PC-9 (cell line): ENCODE measurements at regions of chr14 and their contacts with region 1.

Region 1: GRCh38 chr14:61750708-61751474 is 11.3 kb upstream of the SNAPC1 start:
- DNase-seq: peak; percentile 93 to 95
- H3K4me3 ChIP-seq: peak overlapping the region; percentile 67
- H3K27ac ChIP-seq: peak overlapping the region; percentile 89
- H3K4me1 ChIP-seq: peaks cover 88% of the 10 kb centered on the region
- H3K27me3 ChIP-seq: no peaks in the 10 kb centered on the region
- CTCF ChIP-seq: no peak

Region 2: GRCh38 chr14:61296719-61297502 is 454.0 kb before region 1 on chr14:
- CTCF ChIA-PET with region 1: no interaction called
- POLR2A ChIA-PET with region 1: interaction called, 35 read pairs
- intact Hi-C with region 1: no loop called
- DNase-seq: peak; percentile 12 to 70
- H3K4me3 ChIP-seq: no peak overlapping the region
- H3K27ac ChIP-seq: no peak overlapping the region
- H3K4me1 ChIP-seq: 0 out of 2 replicates have a peak, but pooled peaks cover 4% of the 10 kb centered on the region
- H3K27me3 ChIP-seq: no peaks in the 10 kb centered on the region
- CTCF ChIP-seq: peak; percentile 84

Region 3: DNA sequence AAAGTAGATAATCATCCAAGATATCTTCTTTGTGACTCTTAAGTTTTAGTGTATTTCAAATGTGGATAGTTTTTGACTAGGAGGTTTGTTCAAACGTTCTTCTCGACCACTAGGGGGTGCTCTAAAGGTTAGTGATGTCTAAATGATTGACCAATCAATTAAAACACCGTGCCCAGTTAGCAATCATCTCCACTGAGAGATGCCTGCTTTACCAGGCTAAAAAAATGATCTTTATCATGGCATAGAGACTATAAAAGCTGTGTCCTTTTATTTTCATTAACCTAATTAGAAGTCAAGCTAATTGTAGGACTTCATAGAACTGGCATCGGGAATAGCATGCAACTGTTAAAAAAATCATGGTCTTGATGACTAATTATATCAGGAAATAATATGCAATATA is 275.6 kb before region 1 on chr14:
- CTCF ChIA-PET with region 1: no interaction called
- POLR2A ChIA-PET with region 1: interaction called, 4 read pairs
- intact Hi-C with region 1: loop called (anchors 2 kb)
- DNase-seq: peak in 1 of 2 experiments; percentile 74
- H3K4me3 ChIP-seq: no peak overlapping the region
- H3K27ac ChIP-seq: peak overlapping the region; percentile 94
- H3K4me1 ChIP-seq: peaks cover 92% of the 10 kb centered on the region
- H3K27me3 ChIP-seq: no peaks in the 10 kb centered on the region
- CTCF ChIP-seq: peak; percentile 90

Region 4: GRCh38 chr14:61568572-61569131 is 182.2 kb before region 1 on chr14:
- CTCF ChIA-PET with region 1: no interaction called
- POLR2A ChIA-PET with region 1: interaction called, 10 read pairs
- intact Hi-C with region 1: loop called (anchors 1 kb)
- DNase-seq: peak; percentile 73 to 75
- H3K4me3 ChIP-seq: peak overlapping the region; percentile 48
- H3K27ac ChIP-seq: peak overlapping the region; percentile 98
- H3K4me1 ChIP-seq: peaks cover 97% of the 10 kb centered on the region
- H3K27me3 ChIP-seq: no peaks in the 10 kb centered on the region
- CTCF ChIP-seq: no peak; the same call in 1 of the 2 replicates

Region 5: DNA sequence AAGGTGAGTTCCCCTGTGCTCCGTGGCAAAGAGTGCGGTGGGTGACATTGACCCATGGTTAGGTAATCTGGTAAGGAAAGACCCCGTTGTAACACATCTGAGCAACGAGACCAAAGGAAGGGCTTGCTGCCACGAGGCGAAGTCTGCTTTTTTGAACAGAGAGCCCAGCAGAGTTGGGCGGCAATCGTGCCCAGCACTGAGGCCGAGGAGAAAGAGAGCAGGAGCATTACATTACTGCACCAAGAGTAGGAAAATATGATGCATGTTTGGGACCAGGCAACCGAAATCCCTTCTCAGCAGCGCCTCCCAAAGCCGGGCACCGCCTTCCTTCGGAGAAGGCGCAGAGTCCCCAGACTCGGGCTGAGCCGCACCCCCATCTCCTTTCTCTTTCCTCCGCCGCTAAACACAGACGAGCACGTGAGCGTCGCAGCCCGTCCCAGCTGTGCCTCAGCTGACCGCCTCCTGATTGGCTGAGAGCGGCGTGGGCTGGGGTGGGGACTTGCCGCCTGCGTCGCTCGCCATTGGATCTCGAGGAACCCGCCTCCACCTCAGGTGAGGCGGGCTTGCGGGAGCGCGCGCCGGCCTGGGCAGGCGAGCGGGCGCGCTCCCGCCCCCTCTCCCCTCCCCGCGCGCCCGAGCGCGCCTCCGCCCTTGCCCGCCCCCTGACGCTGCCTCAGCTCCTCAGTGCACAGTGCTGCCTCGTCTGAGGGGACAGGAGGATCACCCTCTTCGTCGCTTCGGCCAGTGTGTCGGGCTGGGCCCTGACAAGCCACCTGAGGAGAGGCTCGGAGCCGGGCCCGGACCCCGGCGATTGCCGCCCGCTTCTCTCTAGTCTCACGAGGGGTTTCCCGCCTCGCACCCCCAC is 55.8 kb before region 1 on chr14 and contains the start of gene HIF1A:
- CTCF ChIA-PET with region 1: no interaction called
- POLR2A ChIA-PET with region 1: interaction called, 6 read pairs
- intact Hi-C with region 1: loop called (anchors 5 kb)
- DNase-seq: peak; percentile 98
- H3K4me3 ChIP-seq: peak within 1 kb of the TSS; percentile 85
- H3K27ac ChIP-seq: peak within 1 kb of the TSS; percentile 93
- H3K4me1 ChIP-seq: peaks cover 28% of the 10 kb centered on the region
- H3K27me3 ChIP-seq: no peaks in the 10 kb centered on the region
- CTCF ChIP-seq: no peak
- total RNA-seq, gene HIF1A: 146 and 154 TPM in 2 replicates

Region 6: GRCh38 chr14:61837336-61838229 is 86.7 kb after region 1 on chr14:
- CTCF ChIA-PET with region 1: no interaction called
- POLR2A ChIA-PET with region 1: no interaction called
- intact Hi-C with region 1: loop called (anchors 5 kb)
- DNase-seq: peak; percentile 69 to 81
- H3K4me3 ChIP-seq: no peak overlapping the region
- H3K27ac ChIP-seq: peak overlapping the region; percentile 60
- H3K4me1 ChIP-seq: peaks cover 21% of the 10 kb centered on the region
- H3K27me3 ChIP-seq: no peaks in the 10 kb centered on the region
- CTCF ChIP-seq: peak; percentile 97

Region 7: DNA sequence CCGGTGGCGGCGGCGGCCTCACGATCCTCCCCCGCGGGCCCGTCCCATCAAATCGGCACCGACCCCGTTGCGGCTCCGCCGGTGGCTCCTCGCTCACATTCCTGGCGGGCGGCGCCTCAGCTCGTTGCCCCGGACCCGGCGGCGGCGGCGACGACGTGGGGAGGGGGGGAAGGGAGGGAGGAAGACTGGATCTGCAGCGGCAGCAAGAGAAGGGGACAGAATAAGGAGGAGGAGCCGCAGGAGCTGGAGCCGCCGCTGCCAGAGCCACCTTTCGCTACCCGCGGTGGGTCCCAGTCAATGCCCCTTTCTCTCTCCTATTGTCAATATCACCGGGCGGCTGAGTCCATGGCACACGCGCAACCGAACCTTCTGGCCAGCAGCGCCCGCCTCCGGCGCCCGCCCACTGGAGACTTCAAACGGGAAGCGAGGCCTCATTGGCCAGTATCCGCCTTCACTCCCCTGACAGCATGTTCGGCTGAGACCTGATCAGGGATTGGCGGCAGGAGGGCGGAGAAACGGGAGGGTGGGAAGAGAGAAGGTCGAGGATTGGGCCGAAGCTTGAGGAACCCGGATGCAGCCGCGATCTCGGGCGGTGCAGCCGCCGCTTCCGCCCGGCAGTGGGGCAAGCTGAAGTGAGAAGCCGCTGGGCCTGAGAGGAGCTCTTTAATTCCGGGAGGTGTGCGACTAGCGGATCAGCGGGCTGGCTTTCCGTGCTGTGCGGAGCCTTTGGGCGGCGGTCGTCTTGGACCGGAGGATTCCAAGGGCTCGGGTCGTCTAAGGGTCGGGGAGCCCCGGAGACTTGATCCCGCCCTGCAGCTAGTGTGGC is 1792.3 kb after region 1 on chr14 and contains the start of gene PPP2R5E:
- CTCF ChIA-PET with region 1: no interaction called
- POLR2A ChIA-PET with region 1: interaction called, 12 read pairs
- intact Hi-C with region 1: no loop called
- DNase-seq: peak; percentile 97 to 99
- H3K4me3 ChIP-seq: peak within 1 kb of the TSS; percentile 82
- H3K27ac ChIP-seq: peak within 1 kb of the TSS; percentile 22
- H3K4me1 ChIP-seq: peaks cover 22% of the 10 kb centered on the region
- H3K27me3 ChIP-seq: no peaks in the 10 kb centered on the region
- CTCF ChIP-seq: no peak
- total RNA-seq, gene PPP2R5E: 66.4 and 67.0 TPM in 2 replicates